ENCODE measurements at regions of chr12 and their contacts with region 1.

Region 1: GRCh38 chr12:67609226-67609870 is 39.2 kb upstream of the DYRK2 start:
- DNase-seq: no peak
- ATAC-seq: no peak
- H3K4me3 ChIP-seq: no peak overlapping the region
- H3K27ac ChIP-seq: no peak overlapping the region
- H3K4me1 ChIP-seq: no peaks in the 10 kb centered on the region
- H3K27me3 ChIP-seq: no peaks in the 10 kb centered on the region
- CTCF ChIP-seq: no peak

Region 2: GRCh38 chr12:67019070-67019469 is 590.3 kb before region 1 on chr12:
- intact Hi-C with region 1: no loop called
- DNase-seq: no peak
- ATAC-seq: no peak
- H3K4me3 ChIP-seq: no peak overlapping the region
- H3K27ac ChIP-seq: no peak overlapping the region
- H3K4me1 ChIP-seq: no peaks in the 10 kb centered on the region
- H3K27me3 ChIP-seq: no peaks in the 10 kb centered on the region
- CTCF ChIP-seq: no peak

Region 3: GRCh38 chr12:67558775-67559174 is 50.6 kb before region 1 on chr12:
- intact Hi-C with region 1: loop called in 1 of 10 experiments (anchors 10 kb)
- DNase-seq: no peak
- ATAC-seq: no peak
- H3K4me3 ChIP-seq: no peak overlapping the region
- H3K27ac ChIP-seq: no peak overlapping the region
- H3K4me1 ChIP-seq: peaks cover 0 to 8% (median 0%) of the 10 kb centered on the region in 9 donors
- H3K27me3 ChIP-seq: no peaks in the 10 kb centered on the region
- CTCF ChIP-seq: no peak